CD8-positive, alpha-beta T cell (primary cell): ENCODE measurements at regions of chr1 and their contacts with region 1.

Region 1: GRCh38 chr1:175192630-175193526 is at the start of gene KIAA0040:
- DNase-seq: peak in 8 of 9 experiments; percentile 27 to 82 (median 56)
- ATAC-seq: peak; percentile 65
- H3K4me3 ChIP-seq: peak within 1 kb of the TSS; percentile 78 to 96
- H3K4me3 Mint-ChIP-seq: peak within 1 kb of the TSS; percentile 91
- H3K27ac ChIP-seq: peak within 1 kb of the TSS; percentile 64 to 84
- H3K27ac Mint-ChIP-seq: peak within 1 kb of the TSS; percentile 88
- H3K4me1 ChIP-seq: peaks cover 48% of the 10 kb centered on the region
- H3K4me1 Mint-ChIP-seq: peaks cover 60% of the 10 kb centered on the region
- H3K27me3 ChIP-seq: no peaks in the 10 kb centered on the region
- H3K27me3 Mint-ChIP-seq: no peaks in the 10 kb centered on the region
- CTCF ChIP-seq: no peak
- total RNA-seq, gene KIAA0040: 8.7 to 9.6 TPM

Region 2: DNA sequence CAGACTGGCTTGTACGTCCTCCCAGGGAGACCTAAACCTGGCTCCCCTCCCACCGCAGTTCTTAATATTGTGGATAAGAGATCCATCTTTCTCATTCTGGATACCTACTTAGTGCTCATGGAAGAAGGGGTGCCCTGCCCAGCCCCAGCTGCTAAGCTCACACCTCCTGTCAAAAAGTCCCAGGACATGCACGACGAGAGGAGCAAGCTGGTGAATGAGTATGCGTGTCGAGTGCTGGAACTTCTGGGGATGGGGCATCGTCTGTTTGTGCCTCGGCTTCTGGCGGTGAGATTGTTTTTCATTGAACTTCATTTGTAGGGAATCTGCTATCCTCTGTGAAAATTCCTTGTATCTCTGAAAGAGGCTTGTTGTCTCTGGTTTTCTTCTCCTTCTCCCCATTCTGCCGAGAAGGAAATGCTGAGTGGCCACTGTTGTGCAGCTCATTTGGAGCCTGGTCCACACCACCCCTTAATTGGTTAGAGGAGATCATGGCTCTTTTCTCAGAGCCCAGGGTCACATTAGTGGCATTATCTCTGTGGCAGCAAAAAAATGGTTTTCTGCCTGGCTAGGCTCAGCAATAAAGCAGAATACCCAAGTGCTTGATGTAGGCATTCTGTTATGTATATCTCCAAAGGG is 392.5 kb before region 1 on chr1:
- CTCF ChIA-PET with region 1: no interaction called
- POLR2A ChIA-PET with region 1: no interaction called
- intact Hi-C with region 1: loop called in 1 of 2 experiments (anchors 10 kb)
- DNase-seq: peak in 4 of 9 experiments; percentile 6 to 37 (median 12)
- ATAC-seq: peak; percentile 3
- H3K4me3 ChIP-seq: peak overlapping the region; percentile 63 to 69
- H3K4me3 Mint-ChIP-seq: no peak overlapping the region
- H3K27ac ChIP-seq: peak overlapping the region; percentile 67 to 82
- H3K27ac Mint-ChIP-seq: no peak overlapping the region
- H3K4me1 ChIP-seq: peaks cover 15% of the 10 kb centered on the region
- H3K4me1 Mint-ChIP-seq: peaks cover 17% of the 10 kb centered on the region
- H3K27me3 ChIP-seq: no peaks in the 10 kb centered on the region
- H3K27me3 Mint-ChIP-seq: no peaks in the 10 kb centered on the region
- CTCF ChIP-seq: no peak

Region 3: DNA sequence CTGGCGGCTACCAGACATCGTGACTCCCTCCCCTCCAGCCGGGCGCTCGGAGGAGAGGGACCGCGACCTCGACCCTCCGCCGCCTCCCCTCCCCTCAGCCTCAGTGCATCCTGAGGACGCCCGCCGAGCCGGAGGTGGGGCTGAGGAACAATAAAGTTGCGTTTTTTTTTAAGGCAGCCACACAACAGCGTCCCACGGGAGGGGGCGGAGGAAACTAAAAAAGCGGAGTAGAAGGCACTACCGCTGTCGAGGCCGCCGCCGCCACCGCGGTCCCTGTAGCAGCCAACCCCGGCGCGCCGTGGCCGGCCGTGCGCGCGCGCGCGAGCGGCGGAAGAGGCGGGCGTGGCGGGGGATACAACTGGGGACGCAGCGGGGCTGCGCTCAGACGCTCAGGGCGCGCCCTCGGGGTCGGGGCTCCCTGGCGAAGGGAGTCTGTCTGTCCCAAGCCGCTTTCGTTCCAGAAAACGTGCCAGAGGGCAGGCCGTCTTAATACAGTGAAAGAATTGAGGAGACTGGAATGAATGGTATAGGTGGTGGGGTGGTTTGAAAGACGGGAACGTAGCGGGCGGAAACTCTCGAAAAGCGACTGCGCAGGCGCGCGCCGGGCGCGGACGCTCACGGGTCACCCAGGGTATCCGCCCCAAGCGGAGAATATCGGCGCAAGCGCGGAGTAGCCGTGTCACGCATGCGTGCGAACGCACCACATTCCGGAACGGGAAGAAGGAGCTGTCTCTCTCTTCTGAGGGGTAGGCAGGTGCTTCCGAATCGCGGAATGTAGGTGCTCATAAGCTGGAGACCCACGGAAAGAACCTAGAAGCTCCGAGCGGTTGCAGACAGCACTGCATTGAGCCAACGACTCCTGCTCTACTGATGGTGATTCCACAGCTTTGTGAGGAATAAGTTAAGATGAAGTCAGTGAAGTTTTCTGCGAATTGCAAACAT is 1014.4 kb after region 1 on chr1 and contains the start of gene COP1:
- CTCF ChIA-PET with region 1: no interaction called
- POLR2A ChIA-PET with region 1: no interaction called
- intact Hi-C with region 1: loop called in 1 of 2 experiments (anchors 10 kb)
- DNase-seq: peak; percentile 94 to 99 (median 97)
- ATAC-seq: peak; percentile 78
- H3K4me3 ChIP-seq: peak within 1 kb of the TSS; percentile 91 to 98
- H3K4me3 Mint-ChIP-seq: peak within 1 kb of the TSS; percentile 99
- H3K27ac ChIP-seq: peak within 1 kb of the TSS; percentile 91 to 96
- H3K27ac Mint-ChIP-seq: peak within 1 kb of the TSS; percentile 99
- H3K4me1 ChIP-seq: peaks cover 32% of the 10 kb centered on the region
- H3K4me1 Mint-ChIP-seq: peaks cover 42% of the 10 kb centered on the region
- H3K27me3 ChIP-seq: no peaks in the 10 kb centered on the region
- H3K27me3 Mint-ChIP-seq: no peaks in the 10 kb centered on the region
- CTCF ChIP-seq: no peak
- total RNA-seq, gene COP1: 33.7 to 36.3 TPM